Activated B cell treated with CpG ODN at 0.5 μM for 24 hours (primary cell): ENCODE measurements at regions of chr3 and their contacts with region 1.

Region 1: DNA sequence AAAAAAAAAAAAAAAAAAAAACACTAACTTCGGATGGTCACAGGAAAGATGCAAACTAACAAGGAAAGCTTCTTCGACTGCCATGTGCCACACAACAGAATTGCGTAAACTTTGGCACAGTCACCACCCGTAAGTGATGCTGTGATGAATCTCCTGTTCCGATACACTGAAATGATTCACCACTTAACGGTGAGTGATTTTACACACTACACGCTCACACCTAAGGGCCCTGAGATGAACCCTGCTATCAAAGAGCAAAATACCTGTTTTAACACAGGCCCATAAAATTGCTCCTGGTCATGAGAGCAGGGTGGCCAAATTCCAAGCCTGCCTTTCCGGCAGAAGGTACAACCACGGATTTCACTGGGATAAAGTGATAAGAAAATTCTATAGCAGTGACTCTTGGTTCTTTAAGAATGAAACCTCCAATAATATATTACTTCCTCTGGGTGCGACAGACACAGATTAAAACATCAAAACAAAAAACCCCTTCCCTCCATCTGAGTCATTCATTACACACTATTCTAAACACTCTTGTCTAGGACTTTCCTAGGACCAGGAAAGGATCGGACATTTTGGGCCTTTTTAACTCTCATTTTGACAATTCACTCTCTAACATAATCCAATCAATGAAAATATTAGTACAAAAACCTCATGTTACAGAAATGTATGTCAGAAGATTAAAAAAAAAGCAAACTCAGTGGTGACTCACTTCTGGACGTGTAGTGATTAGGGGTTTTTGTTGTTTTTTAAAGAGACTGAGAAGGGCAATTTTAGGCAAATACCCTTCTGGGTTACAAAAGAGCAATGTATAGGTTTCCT is 28.3 kb downstream of the LRIG1 start:
- DNase-seq: peak; percentile 32
- ATAC-seq: peak; percentile 87
- H3K4me3 Mint-ChIP-seq: peak overlapping the region; percentile 71
- H3K27ac Mint-ChIP-seq: peak overlapping the region; percentile 95
- H3K4me1 Mint-ChIP-seq: peaks cover 58% of the 10 kb centered on the region
- H3K27me3 Mint-ChIP-seq: peaks cover 10% of the 10 kb centered on the region
- CTCF ChIP-seq: no peak

Region 2: GRCh38 chr3:66010739-66011655 is 461.5 kb before region 1 on chr3:
- CTCF ChIA-PET with region 1: no interaction called
- POLR2A ChIA-PET with region 1: no interaction called
- intact Hi-C with region 1: no loop called
- DNase-seq: no peak
- ATAC-seq: no peak
- H3K4me3 Mint-ChIP-seq: no peak overlapping the region
- H3K27ac Mint-ChIP-seq: no peak overlapping the region
- H3K4me1 Mint-ChIP-seq: no peaks in the 10 kb centered on the region
- H3K27me3 Mint-ChIP-seq: peaks cover 1% of the 10 kb centered on the region
- CTCF ChIP-seq: no peak

Region 3: DNA sequence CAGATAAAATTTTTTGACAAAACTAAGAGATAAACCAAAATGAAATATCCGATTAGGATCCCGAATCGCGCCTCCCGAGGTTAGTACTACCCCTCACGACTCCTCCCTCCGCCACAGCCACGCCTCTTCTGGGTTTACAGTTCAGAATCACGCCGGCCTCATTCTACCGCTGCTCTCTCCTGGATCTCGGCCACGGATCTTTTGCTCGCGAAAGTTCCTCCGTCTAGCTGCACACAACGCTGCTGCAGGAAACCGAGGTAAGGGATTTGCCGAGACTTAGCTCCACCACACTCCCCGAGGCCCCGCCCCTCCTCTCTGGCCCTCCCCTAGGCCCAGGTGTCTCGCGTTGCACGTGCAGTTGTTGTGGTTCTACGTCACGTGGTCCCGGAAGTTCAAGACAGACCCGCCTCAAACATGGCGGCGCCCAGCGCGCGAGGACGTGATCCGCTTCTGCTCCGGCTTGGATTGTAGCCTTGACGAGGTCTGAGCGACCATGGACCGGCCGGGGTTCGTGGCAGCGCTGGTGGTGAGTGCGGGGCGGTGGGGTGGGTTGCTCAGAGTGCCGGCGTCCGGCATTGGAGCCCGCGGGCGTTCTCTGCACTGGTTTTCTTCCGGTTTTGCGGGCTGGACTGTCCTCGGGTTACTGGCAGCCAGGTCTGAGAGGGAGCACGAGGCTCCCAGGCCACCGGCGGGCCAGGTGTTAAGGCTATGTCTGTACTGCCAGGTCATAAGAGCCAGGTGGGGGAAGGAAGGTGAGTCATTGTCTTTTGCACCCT is 251.7 kb before region 1 on chr3 and contains the start of gene SLC25A26:
- CTCF ChIA-PET with region 1: no interaction called
- POLR2A ChIA-PET with region 1: no interaction called
- intact Hi-C with region 1: loop called (anchors 5 kb)
- DNase-seq: peak; percentile 90
- ATAC-seq: peak; percentile 96
- H3K4me3 Mint-ChIP-seq: peak within 1 kb of the TSS; percentile 98
- H3K27ac Mint-ChIP-seq: peak within 1 kb of the TSS; percentile 93
- H3K4me1 Mint-ChIP-seq: peaks cover 40% of the 10 kb centered on the region
- H3K27me3 Mint-ChIP-seq: peaks cover 3% of the 10 kb centered on the region
- CTCF ChIP-seq: no peak
- total RNA-seq, gene SLC25A26: 20.8 and 23.2 TPM in 2 replicates

Region 4: GRCh38 chr3:66261355-66261754 is 211.2 kb before region 1 on chr3:
- CTCF ChIA-PET with region 1: no interaction called
- POLR2A ChIA-PET with region 1: no interaction called
- intact Hi-C with region 1: no loop called
- DNase-seq: no peak
- ATAC-seq: no peak
- H3K4me3 Mint-ChIP-seq: no peak overlapping the region
- H3K27ac Mint-ChIP-seq: no peak overlapping the region
- H3K4me1 Mint-ChIP-seq: peaks cover 2% of the 10 kb centered on the region
- H3K27me3 Mint-ChIP-seq: no peaks in the 10 kb centered on the region
- CTCF ChIP-seq: no peak

Region 5: DNA sequence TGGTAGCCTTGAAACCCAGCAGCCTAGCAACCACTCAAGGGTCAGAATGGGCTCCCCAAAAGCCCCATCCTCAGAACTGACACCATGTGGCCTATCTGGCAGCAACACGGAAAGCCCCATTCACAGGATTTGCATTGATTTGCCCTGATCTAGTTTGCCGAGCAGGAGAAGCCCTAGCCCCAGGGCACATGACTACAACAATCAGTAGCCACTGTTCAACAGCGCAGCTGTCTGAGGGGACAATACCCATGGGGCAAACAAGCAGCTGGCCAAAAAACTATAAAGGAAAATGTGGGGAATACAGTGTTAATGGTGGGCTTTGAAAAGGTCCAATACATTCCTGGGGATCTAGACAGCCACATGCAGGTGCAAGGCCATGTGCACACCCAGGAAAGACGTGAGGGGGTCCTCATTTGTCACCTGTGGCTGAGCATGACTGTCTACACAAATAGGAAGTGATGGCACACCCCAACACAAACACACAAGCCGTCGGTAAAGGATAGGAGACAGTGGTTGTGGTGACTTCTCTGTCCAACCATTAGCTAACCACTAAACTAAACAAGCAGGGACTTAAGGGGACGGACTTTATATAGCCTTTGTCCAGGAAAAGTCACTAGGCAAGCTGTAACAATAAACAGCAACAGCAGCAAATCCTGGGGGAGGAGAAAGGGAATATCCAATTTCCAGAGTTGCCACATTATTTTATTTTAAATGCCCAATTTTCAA is 85.4 kb before region 1 on chr3:
- CTCF ChIA-PET with region 1: no interaction called
- POLR2A ChIA-PET with region 1: interaction called, 3 read pairs
- intact Hi-C with region 1: loop called (anchors 1 kb)
- DNase-seq: no peak
- ATAC-seq: peak; percentile 76
- H3K4me3 Mint-ChIP-seq: peak overlapping the region; percentile 69
- H3K27ac Mint-ChIP-seq: peak overlapping the region; percentile 89
- H3K4me1 Mint-ChIP-seq: peaks cover 63% of the 10 kb centered on the region
- H3K27me3 Mint-ChIP-seq: no peaks in the 10 kb centered on the region
- CTCF ChIP-seq: no peak

Region 6: GRCh38 chr3:66394019-66394752 is 78.3 kb before region 1 on chr3:
- CTCF ChIA-PET with region 1: no interaction called
- POLR2A ChIA-PET with region 1: interaction called, 3 read pairs
- intact Hi-C with region 1: loop called (anchors 2 kb)
- DNase-seq: no peak
- ATAC-seq: peak; percentile 82
- H3K4me3 Mint-ChIP-seq: peak overlapping the region; percentile 84
- H3K27ac Mint-ChIP-seq: peak overlapping the region; percentile 85
- H3K4me1 Mint-ChIP-seq: peaks cover 53% of the 10 kb centered on the region
- H3K27me3 Mint-ChIP-seq: no peaks in the 10 kb centered on the region
- CTCF ChIP-seq: no peak

Region 7: GRCh38 chr3:66450390-66451022 is 22.0 kb before region 1 on chr3:
- CTCF ChIA-PET with region 1: interaction called, 3 read pairs
- POLR2A ChIA-PET with region 1: no interaction called
- intact Hi-C with region 1: loop called (anchors 2 kb)
- DNase-seq: no peak
- ATAC-seq: no peak
- H3K4me3 Mint-ChIP-seq: no peak overlapping the region
- H3K27ac Mint-ChIP-seq: no peak overlapping the region
- H3K4me1 Mint-ChIP-seq: no peaks in the 10 kb centered on the region
- H3K27me3 Mint-ChIP-seq: no peaks in the 10 kb centered on the region
- CTCF ChIP-seq: no peak

Region 8: GRCh38 chr3:66457255-66457654 is 15.3 kb before region 1 on chr3:
- CTCF ChIA-PET with region 1: interaction called, 3 read pairs
- POLR2A ChIA-PET with region 1: interaction called, 15 read pairs
- intact Hi-C with region 1: no loop called
- DNase-seq: no peak
- ATAC-seq: no peak
- H3K4me3 Mint-ChIP-seq: no peak overlapping the region
- H3K27ac Mint-ChIP-seq: no peak overlapping the region
- H3K4me1 Mint-ChIP-seq: no peaks in the 10 kb centered on the region
- H3K27me3 Mint-ChIP-seq: no peaks in the 10 kb centered on the region
- CTCF ChIP-seq: no peak

Region 9: GRCh38 chr3:66483406-66483906 is 10.9 kb after region 1 on chr3:
- CTCF ChIA-PET with region 1: interaction called, 4 read pairs
- POLR2A ChIA-PET with region 1: interaction called, 8 read pairs
- intact Hi-C with region 1: loop called (anchors 1 kb)
- DNase-seq: no peak
- ATAC-seq: peak; percentile 55
- H3K4me3 Mint-ChIP-seq: no peak overlapping the region
- H3K27ac Mint-ChIP-seq: no peak overlapping the region
- H3K4me1 Mint-ChIP-seq: peaks cover 47% of the 10 kb centered on the region
- H3K27me3 Mint-ChIP-seq: peaks cover 2% of the 10 kb centered on the region
- CTCF ChIP-seq: no peak